Vagina (tissue), 2 donors: ENCODE measurements at regions of chr3 and their contacts with region 1.

Region 1: DNA sequence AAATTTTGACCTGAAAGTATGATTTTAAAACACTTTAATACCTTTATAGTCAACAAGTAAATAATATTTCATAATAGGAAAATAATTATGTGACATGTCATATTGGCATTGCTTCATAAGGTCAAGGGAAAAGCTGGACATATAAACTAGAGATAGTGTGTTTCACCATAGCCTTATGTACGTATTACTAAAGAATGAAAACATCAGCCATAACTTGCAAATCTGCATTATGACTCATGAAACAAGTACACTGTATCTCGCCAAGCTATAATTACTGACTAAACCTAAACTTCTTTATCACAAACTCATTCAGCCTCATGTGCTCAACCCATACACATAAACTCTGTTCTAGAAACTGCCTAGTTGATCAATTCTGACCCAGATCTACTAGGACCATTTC is 950.1 kb downstream of the FHIT start:
- DNase-seq: no peak
- H3K4me3 ChIP-seq: no peak overlapping the region
- H3K27ac ChIP-seq: no peak overlapping the region
- H3K4me1 ChIP-seq: no peaks in the 10 kb centered on the region
- H3K27me3 ChIP-seq: no peaks in the 10 kb centered on the region
- CTCF ChIP-seq: no peak
- POLR2A ChIP-seq: no peak

Region 2: GRCh38 chr3:61066800-61067199 is 765.7 kb after region 1 on chr3:
- intact Hi-C with region 1: no loop called
- DNase-seq: no peak
- H3K4me3 ChIP-seq: no peak overlapping the region
- H3K27ac ChIP-seq: no peak overlapping the region
- H3K4me1 ChIP-seq: no peaks in the 10 kb centered on the region
- H3K27me3 ChIP-seq: no peaks in the 10 kb centered on the region
- CTCF ChIP-seq: no peak
- POLR2A ChIP-seq: no peak

Region 3: DNA sequence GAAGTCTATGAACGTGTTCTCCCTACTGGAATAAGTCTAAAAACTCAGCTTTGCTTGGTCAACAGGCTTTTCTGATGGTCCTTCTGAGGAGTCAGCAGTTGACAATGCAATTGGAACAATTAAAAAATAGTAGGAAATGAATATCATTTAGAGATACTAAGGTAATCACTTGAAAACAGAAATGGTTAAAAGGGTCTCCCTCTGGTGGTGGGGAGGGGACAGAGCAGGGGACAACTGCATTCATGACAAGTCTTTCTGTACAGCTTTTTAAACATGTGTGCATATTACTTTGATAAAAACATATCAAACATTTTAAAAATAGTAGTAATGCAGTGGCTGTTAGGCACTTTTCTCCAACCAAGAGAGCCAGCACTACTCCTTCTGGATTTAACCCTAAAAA is 1070.0 kb after region 1 on chr3:
- intact Hi-C with region 1: loop called (anchors 10 kb)
- DNase-seq: no peak
- H3K4me3 ChIP-seq: no peak overlapping the region
- H3K27ac ChIP-seq: no peak overlapping the region
- H3K4me1 ChIP-seq: no peaks in the 10 kb centered on the region
- H3K27me3 ChIP-seq: no peaks in the 10 kb centered on the region
- CTCF ChIP-seq: no peak
- POLR2A ChIP-seq: no peak